Body of pancreas (tissue), 4 donors: ENCODE measurements at regions of chr16 and their contacts with region 1.

Region 1: DNA sequence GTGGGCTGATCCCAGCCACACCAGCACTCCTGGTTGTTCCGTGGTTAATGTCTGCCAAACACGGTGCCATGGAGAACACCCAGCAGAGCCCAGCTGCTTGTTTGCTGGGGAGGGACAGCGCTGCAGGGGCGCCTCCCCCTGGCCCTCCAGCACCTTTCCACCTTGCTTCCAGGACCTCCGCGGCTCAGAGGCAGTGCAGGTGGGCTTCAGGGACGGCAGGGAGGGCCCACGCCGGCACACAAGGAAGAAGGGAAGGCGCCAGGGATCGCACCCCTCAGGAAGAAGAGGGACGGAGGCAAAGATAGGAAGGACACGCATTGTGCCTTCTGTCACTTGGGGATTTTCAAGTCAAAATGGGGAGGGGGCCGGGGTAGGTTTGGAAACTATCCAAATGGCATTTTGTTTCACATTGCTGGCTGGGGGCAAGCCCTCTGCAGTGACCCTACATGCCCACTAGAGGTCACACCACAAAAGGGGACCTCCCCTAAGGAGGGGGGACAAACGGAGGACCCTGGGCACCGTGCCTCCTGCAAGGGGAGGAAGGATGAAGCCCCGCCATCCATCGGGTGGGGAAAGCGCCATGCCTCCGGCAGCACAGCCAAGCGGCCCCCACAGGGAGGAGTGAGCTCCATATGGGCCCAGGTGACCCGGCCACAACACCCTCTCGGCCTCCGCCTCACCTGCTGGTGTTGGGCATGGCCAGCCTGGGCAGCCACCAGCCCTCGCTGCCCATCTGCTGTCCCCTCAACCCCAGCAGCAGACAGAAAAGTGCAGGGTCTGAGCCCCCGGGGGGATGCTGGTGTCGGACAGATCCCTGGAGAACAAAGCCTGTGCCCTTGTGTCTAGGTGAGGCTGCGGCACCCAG is 7.5 kb upstream of the C16orf95 start:
- DNase-seq: peak in 3 of 4 donors; percentile 20 to 51 (median 39)
- ATAC-seq: peak; percentile 40
- H3K4me3 ChIP-seq: no peak overlapping the region
- H3K27ac ChIP-seq: no peak overlapping the region
- H3K4me1 ChIP-seq: peaks cover 8% of the 10 kb centered on the region
- H3K27me3 ChIP-seq: no peaks in the 10 kb centered on the region
- CTCF ChIP-seq: peak; percentile 54 to 73 (median 71)
- POLR2A ChIP-seq: no peak

Region 2: GRCh38 chr16:87375426-87376135 is 50.9 kb after region 1 on chr16:
- intact Hi-C with region 1: loop called (anchors 5 kb)
- DNase-seq: no peak
- ATAC-seq: no peak
- H3K4me3 ChIP-seq: no peak overlapping the region
- H3K27ac ChIP-seq: peak overlapping the region in 1 of 4 donors; percentile 3
- H3K4me1 ChIP-seq: peaks cover 28% of the 10 kb centered on the region
- H3K27me3 ChIP-seq: no peaks in the 10 kb centered on the region
- CTCF ChIP-seq: no peak
- POLR2A ChIP-seq: no peak

Region 3: GRCh38 chr16:88170528-88170991 is 845.9 kb after region 1 on chr16:
- intact Hi-C with region 1: no loop called
- DNase-seq: no peak
- ATAC-seq: no peak
- H3K4me3 ChIP-seq: no peak overlapping the region
- H3K27ac ChIP-seq: no peak overlapping the region
- H3K4me1 ChIP-seq: peaks cover 13% of the 10 kb centered on the region
- H3K27me3 ChIP-seq: no peaks in the 10 kb centered on the region
- CTCF ChIP-seq: no peak
- POLR2A ChIP-seq: no peak